Activated CD4-positive, alpha-beta T cell treated with anti-CD3 and anti-CD28 coated beads, Interleukin-2, amount 10 ng/mL, durations not matched to agents 7 days and 5 days (primary cell): ENCODE measurements at regions of chr9 and their contacts with region 1.

Region 1: GRCh38 chr9:19464764-19465585 is 56.2 kb downstream of the ACER2 start:
- DNase-seq: peak; percentile 72
- H3K4me3 Mint-ChIP-seq: peak overlapping the region; percentile 80
- H3K27ac Mint-ChIP-seq: peak overlapping the region; percentile 79
- H3K4me1 Mint-ChIP-seq: peaks cover 14% of the 10 kb centered on the region
- H3K27me3 Mint-ChIP-seq: peaks cover 2% of the 10 kb centered on the region

Region 2: DNA sequence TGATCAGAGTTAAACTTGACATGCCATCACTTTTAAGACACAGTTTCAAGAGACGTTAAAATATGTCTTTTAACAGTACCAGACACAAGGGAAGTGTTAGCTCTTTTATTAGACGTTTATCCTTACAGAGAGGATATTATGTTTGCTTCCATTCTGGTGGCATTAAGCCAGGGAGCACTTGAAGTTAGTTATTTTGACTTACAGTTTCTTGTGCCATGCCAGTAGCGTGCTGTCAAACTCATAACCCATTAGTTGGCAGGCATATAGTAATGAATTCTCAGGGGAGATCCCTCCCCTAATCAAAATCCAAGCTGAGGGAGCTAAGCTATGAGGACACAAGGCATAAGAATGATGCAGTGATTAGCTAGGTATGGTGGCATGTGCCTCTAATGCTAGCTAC is 151.4 kb before region 1 on chr9:
- CTCF ChIA-PET with region 1: no interaction called
- POLR2A ChIA-PET with region 1: no interaction called
- DNase-seq: no peak
- H3K4me3 Mint-ChIP-seq: no peak overlapping the region
- H3K27ac Mint-ChIP-seq: no peak overlapping the region
- H3K4me1 Mint-ChIP-seq: peaks cover 3% of the 10 kb centered on the region
- H3K27me3 Mint-ChIP-seq: no peaks in the 10 kb centered on the region

Region 3: GRCh38 chr9:19441730-19442129 is 23.2 kb before region 1 on chr9:
- CTCF ChIA-PET with region 1: interaction called, 13 read pairs
- POLR2A ChIA-PET with region 1: no interaction called
- DNase-seq: no peak
- H3K4me3 Mint-ChIP-seq: peak overlapping the region; percentile 44
- H3K27ac Mint-ChIP-seq: peak overlapping the region; percentile 81
- H3K4me1 Mint-ChIP-seq: peaks cover 18% of the 10 kb centered on the region
- H3K27me3 Mint-ChIP-seq: no peaks in the 10 kb centered on the region

Region 4: DNA sequence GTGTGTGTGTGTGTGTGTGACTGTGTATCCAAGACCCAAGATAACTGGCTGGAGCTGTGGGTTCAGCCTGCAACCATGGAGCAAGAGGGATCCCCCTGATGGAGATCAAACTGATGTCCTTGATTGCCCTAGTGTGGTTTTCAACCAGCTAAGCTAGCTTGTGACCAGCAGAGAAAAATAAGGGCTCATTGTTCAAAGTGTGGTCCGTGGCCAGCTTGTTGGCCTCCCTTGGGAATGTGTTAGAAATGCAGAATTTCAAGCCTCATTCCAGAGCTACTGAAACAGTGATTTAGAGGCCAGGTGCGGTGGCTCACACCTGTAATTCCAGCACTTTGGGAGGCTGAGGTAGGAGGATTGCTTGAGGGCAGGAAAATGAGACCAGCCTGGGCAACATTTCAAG is 23.7 kb after region 1 on chr9:
- CTCF ChIA-PET with region 1: interaction called, 10 read pairs
- POLR2A ChIA-PET with region 1: no interaction called
- DNase-seq: no peak
- H3K4me3 Mint-ChIP-seq: no peak overlapping the region
- H3K27ac Mint-ChIP-seq: no peak overlapping the region
- H3K4me1 Mint-ChIP-seq: peaks cover 6% of the 10 kb centered on the region
- H3K27me3 Mint-ChIP-seq: peaks cover 2% of the 10 kb centered on the region